Cardiac septum (tissue), 1 donor: ENCODE measurements at regions of chr1 and their contacts with region 1.

Region 1: DNA sequence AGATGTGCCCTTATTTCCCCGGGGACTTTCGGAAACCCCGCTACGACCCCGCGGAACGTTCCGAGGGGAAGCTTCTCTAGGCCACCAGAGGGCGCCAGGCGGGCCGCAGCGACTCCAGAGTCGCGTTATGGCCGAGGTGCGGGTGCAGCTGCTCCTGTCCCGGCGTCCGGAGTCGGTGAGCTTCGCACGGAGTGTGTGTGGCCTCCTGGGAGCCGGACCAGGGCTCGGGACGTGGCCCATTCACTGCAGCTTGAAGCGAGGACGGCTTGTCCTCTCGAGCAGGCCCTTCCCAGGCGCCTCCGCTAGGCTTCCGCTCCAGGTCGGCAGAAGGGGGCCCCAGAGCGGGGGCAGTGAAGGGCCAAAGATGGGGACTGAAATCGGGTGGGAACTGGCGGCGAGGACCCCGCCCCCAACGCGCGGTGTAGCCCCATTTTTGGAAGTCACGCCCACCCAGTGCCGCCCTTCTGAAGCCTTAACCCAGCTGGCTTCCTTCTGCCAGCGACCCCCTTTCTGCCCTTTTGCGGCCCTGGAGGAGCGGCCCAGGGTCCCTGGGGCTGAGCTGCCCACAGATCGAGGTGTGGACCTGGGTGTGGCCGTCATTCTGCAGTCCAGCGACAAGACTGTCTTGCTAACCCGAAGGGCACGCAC is at the start of gene NUDT17:
- DNase-seq: peak; percentile 91
- total RNA-seq, gene NUDT17: 2.7 TPM

Region 2: DNA sequence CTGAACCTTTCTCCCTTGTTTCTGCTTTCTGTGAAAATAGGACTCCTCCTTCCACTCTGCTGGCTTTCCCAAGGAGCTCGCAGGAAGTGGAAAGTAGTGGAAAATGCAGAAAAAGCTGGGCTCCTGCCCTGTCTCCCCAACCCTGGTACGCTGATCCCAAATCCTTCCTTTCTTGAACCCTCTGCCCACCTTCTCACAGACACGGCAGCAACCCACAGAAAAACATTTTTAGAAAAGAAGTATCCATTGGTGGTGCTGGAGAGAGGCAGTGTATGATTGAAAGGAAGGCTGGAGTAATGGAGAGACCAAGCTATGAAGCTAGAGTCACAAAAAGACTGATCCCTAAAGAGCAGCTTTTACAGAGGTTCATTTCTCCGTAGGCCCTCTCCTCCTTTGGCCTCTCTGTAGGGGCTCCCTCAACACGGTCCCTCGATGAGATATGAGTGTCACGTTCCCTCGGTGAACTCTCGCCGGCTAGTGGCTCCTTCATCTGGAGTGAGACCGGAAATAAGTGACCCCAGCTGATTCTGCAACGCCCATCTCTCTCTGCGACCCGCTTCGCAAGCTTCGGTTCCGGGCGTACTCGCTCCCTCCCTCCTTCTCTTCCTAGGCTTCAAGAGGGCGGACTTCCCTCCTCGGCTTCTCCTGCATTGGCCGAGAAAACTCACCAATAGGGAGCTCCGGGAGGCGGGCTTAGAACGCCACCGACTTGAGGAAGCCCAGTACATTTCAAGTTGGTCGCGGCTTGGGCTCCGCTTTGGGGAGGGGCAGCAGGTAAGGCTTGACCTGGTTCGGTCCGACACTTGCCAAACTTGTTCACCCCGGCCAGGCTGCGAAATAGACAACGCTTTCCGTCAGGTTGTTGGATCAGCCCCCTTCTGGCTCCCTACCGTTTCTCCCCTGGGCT is 118.6 kb after region 1 on chr1 and contains the starts of genes ANKRD34A and POLR3GL:
- intact Hi-C with region 1: no loop called
- DNase-seq: peak; percentile 98
- total RNA-seq, gene ANKRD34A: 2.9 TPM
- total RNA-seq, gene POLR3GL: 36.8 TPM

Region 3: DNA sequence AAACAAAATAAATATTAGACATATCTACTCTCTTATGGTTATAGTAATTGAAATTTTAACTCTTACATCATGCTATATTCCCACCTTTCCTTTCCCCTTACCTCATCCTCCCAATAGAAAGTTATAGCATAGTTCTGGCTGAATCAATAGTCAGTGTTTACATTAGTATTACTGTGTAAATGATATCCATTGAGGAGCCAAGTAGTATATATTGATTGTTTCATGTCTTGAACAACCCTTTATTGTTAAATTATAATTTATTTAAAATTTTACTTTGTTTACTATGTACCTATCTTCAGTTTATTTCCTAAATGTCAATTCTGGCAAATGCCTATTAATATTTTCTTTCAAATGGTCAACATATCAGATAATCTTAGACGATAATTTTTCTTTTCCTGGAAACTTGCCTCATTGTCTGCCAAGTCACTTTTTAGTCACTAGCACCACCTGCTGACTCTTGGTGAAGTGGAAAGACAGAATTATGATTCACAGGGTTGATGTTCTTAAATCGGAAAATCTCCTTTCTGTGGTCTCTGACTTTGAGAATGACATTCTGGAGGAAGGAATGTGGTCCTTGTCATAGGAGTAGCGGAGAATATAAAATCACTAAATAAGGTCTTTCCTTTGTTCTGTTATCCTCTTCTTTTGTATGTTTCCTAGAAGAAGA is 167.2 kb after region 1 on chr1:
- intact Hi-C with region 1: loop called (anchors 1 kb)
- DNase-seq: no peak